Right ventricle myocardium inferior (tissue), 1 donor: ENCODE measurements at regions of chr13 and their contacts with region 1.

Region 1: GRCh38 chr13:26186118-26186870 is 35.8 kb downstream of the RNF6 start:
- DNase-seq: peak; percentile 94
- ATAC-seq: peak; percentile 95

Region 2: GRCh38 chr13:26095338-26095737 is 91.0 kb before region 1 on chr13:
- intact Hi-C with region 1: no loop called
- DNase-seq: no peak
- ATAC-seq: no peak

Region 3: DNA sequence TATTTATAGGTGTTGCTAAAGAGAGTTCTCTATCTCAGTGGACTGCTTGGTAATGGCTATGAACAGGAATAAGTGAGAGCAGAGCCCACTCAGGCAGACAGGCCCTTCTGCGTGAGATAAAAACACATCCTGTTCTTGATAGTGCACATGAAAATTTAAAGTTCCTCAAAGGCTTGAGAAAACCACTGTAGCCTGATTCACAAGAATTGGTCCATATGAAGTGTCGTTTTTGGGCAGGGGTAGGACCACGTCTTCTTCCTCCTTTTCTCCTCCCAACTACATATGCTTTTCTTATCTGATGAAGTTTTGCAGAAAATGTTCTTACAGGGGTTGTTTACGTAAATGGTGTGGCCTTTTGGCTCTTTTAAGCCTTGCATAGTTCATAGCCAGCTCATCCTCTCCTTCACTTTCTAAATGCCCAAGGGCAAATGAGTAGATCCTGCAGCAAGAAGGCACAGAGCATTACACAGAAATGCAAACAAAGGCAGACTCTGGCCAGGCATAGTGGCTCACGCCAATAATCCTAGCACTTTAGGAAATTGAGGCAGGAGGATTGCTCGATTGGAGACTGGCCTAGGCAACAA is 18.0 kb before region 1 on chr13:
- intact Hi-C with region 1: no loop called
- DNase-seq: no peak
- ATAC-seq: no peak

Region 4: GRCh38 chr13:26221721-26222519 is 35.6 kb after region 1 on chr13 and contains the start of gene RNF6:
- intact Hi-C with region 1: loop called (anchors 5 kb)
- DNase-seq: peak; percentile 97
- ATAC-seq: peak; percentile 98
- total RNA-seq, gene RNF6: 19.7 TPM

Region 5: DNA sequence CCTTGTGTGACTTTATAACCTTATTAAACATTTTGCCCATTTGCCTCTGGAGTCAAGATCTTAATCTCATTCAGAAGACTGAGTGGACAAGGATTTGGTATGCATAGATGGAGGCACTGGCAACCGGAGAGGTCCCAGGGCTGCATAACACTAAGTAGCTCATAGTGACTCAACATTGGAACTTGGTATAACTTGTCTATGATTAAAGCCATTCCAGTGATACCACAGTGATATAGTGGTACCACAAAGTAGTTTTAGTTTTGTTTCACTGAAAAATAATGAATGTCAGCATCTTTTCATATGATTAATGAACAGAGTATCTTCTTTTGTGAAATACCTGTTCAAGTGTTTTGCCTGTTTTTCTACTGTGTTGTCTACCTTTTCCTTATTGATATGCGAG is 94.0 kb after region 1 on chr13:
- intact Hi-C with region 1: no loop called
- DNase-seq: no peak
- ATAC-seq: no peak

Region 6: GRCh38 chr13:26300140-26300539 is 113.8 kb after region 1 on chr13:
- intact Hi-C with region 1: no loop called
- DNase-seq: no peak
- ATAC-seq: no peak

Region 7: DNA sequence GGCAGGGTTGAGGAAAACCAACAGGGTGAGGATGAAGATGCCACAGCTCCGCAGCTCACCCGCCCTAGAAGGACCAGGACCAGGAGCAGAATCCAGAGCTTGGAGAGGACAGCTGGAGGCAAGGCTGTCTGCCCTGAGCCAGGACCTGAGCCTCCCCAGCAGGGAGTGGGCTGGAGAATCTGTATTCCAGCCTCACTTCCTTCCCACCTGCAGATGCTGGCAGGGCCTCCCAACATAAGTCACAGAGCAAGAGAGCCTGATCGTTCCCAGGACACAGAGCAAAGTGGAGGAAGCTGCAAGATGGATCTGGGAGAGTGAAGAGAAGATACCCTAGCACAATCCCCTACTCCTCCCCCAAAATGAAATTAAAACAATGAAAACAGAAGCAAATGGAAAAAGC is 309.5 kb after region 1 on chr13:
- intact Hi-C with region 1: loop called (anchors 1 kb)
- DNase-seq: no peak
- ATAC-seq: no peak